Activated T-helper 2 cell treated with anti-CD3 and anti-CD28 coated beads, Interferon-gamma antibody, Interleukin-2, Interleukin-4, amounts not matched to agents 10 μg/mL and 5 μg/mL and 100 μg/mL, durations not matched to agents 14 hours and 24 hours and 36 hours (primary cell): ENCODE measurements at regions of chr4 and their contacts with region 1.

Region 1: DNA sequence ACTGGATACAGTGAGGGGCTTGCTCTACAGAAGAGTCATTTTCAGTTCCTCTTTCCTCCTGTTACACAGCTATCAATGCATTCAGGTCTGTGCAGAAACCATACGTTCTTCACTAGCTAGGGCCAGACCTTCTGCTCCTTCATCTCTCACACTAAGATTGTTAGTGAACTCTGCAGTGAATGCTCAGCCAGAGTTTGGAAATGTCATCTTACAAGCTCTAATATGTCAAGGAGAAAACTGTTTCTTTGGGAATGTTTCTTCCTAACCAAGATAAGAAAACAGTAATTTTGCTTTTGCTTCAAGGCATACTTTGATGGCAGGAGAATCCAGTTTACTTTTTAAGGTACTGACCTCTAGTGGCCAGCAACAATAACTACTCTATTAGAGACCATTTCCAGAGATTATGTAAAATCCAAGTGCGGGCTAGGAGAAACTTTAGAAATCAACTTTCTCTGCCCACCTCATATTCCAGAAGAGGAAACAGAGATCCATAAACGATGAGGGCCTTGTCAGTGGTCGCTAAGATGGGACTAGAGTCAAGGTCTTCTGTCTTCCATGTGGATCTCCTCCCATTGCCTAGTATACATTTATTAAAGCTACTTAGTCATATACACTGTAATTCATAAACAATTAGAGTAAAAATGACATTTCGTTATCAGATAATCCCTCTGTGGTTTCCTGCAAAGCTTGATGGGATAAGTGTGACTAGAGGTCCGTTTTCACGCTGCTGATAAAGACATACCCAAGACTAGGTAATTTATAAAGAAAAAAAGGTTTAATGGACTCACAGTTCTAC is 12.1 kb upstream of the CC2D2A start:
- DNase-seq: no peak
- H3K4me3 Mint-ChIP-seq: no peak overlapping the region
- H3K27ac Mint-ChIP-seq: no peak overlapping the region
- H3K4me1 Mint-ChIP-seq: no peaks in the 10 kb centered on the region
- H3K27me3 Mint-ChIP-seq: peaks cover 25% of the 10 kb centered on the region

Region 2: GRCh38 chr4:15396157-15396800 is 61.3 kb before region 1 on chr4:
- intact Hi-C with region 1: loop called (anchors 2 kb)
- DNase-seq: peak; percentile 46
- H3K4me3 Mint-ChIP-seq: no peak overlapping the region
- H3K27ac Mint-ChIP-seq: no peak overlapping the region
- H3K4me1 Mint-ChIP-seq: peaks cover 16% of the 10 kb centered on the region
- H3K27me3 Mint-ChIP-seq: no peaks in the 10 kb centered on the region